ENCODE measurements at regions of chr7 and their contacts with region 1.

Region 1: GRCh38 chr7:22732556-22733126 is 5.6 kb downstream of the IL6 start:
- DNase-seq: no peak
- CTCF ChIP-seq: no peak

Region 2: DNA sequence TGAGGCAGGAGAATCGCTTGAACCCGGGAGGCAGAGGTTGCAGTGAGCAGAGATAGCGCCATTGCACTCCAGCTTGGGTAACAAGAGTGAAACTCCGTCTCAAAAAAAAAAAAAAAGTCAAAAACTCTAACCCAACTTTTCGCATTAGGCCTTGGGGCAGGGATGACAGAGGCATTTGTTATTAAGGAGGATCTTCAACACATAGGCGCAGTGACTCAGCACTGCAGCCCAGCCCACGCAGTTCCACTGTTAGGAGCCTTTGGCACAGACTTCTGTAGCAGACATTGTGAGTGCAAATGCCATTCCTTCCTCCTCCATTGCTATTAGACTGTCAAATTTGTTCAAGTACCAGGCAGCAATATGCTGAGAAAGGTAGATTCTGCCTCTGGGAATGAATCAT is 329.8 kb after region 1 on chr7:
- in situ Hi-C with region 1: loop called (anchors 10 kb)
- DNase-seq: no peak
- CTCF ChIP-seq: no peak

Measured in GM13976 (cell line).